Posterior vena cava (tissue), 2 donors: ENCODE measurements at regions of chr11 and their contacts with region 1.

Region 1: DNA sequence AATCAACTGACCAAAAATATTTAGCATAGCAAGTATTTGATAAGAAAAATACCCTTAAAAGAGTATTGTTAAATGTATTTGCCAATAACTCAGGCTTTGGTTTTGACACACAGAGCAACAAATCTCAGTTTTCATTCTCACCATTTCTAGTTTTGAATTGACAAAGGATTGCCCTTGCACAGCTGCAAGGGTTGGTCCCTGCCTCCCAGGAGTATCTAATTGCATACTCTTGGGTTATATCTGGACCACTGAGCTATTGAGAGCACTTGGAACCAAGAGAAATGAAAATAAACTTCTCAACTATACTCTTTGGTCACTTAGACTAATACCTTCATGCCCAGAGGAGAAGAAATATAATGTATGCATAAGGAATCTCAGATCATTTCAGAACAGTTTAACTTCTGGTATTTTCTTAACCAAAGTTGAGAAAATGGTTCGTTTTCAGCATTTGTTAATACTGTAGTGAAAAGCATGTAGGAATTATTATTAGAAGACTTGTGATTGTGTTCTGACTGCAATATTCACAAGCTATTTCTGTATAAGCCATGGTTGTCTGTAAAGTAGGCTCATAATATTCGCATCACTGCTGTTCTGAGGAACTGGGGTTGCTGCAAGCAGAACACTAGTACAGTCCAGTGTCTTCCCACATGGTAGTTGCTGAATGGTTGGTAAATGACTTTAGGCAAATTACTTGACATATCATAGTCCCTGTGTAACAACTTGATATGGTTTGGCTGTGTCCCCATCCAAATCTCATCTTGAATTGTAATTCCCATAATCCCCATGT is 7.9 kb downstream of the C2CD3 start:
- DNase-seq: no peak

Region 2: DNA sequence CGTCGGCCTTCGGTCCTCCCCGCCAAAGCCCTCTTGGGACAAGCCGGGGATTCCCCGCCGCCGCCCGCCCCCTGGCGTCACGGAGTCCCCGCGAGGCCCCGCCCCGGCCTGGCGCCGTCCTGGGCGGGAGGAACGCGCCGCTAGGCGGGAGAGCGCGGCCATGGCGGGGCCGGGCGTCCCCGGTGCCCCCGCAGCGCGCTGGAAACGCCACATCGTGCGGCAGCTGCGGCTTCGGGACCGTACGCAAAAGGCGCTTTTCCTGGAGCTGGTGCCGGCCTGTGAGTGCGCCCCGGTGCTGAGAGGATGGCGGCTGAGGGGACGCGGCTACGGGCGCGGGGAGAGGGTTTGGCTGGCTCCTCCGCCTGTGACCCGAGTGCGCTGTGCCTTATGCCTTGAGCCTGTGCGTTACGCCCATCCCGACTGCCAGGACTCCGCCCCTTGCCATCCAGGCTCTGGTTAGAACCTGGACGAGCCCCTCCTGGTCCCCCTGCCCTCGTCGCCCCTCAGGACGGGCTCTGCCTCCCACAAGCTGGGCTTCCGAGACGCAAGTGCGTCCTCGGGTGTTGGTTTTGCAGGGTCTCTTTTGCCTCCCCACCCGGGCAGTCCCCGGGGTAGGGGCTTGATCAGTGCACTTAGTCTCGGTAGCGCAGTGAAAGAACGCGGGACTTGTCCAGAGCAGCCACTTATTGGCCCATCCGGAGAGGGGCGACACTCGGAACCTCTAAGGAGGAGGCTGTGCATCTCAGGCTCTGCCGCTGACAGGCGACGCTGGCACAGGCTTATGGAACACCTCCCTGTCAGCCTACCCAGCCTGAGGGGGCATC is 1348.4 kb before region 1 on chr11 and contains the start of gene ATG16L2:
- intact Hi-C with region 1: loop called in 1 of 2 experiments (anchors 5 kb)
- DNase-seq: peak; percentile 96
- total RNA-seq, gene ATG16L2: 13.5 to 17.6 TPM

Region 3: GRCh38 chr11:74185695-74186094 is 22.8 kb after region 1 on chr11:
- intact Hi-C with region 1: no loop called
- DNase-seq: no peak